GM12878 (cell line): ENCODE measurements at regions of chr11 and their contacts with region 1.

Region 1: DNA sequence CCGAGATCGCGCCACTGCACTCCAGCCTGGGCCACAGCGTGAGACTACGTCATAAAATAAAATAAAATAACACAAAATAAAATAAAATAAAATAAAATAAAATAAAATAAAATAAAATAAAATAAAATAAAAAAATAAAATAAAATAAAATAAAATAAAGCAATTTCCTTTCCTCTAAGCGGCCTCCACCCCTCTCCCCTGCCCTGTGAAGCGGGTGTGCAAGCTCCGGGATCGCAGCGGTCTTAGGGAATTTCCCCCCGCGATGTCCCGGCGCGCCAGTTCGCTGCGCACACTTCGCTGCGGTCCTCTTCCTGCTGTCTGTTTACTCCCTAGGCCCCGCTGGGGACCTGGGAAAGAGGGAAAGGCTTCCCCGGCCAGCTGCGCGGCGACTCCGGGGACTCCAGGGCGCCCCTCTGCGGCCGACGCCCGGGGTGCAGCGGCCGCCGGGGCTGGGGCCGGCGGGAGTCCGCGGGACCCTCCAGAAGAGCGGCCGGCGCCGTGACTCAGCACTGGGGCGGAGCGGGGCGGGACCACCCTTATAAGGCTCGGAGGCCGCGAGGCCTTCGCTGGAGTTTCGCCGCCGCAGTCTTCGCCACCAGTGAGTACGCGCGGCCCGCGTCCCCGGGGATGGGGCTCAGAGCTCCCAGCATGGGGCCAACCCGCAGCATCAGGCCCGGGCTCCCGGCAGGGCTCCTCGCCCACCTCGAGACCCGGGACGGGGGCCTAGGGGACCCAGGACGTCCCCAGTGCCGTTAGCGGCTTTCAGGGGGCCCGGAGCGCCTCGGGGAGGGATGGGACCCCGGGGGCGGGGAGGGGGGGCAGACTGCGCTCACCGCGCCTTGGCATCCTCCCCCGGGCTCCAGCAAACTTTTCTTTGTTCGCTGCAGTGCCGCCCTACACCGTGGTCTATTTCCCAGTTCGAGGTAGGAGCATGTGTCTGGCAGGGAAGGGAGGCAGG is at the start of gene GSTP1:
- DNase-seq: no peak
- ATAC-seq: peak; percentile 82
- H3K4me3 ChIP-seq: peak within 1 kb of the TSS; percentile 85
- H3K27ac ChIP-seq: peak within 1 kb of the TSS; percentile 89
- H3K4me1 ChIP-seq: peaks cover 54% of the 10 kb centered on the region
- H3K27me3 ChIP-seq: no peaks in the 10 kb centered on the region; a peak in 1 of 4 replicates
- CTCF ChIP-seq: peak; percentile 54 to 71 (median 60); a peak in 5 of 6 replicates
- EP300 ChIP-seq: no peak
- POLR2A ChIP-seq: peak; percentile 96
- RAD21 ChIP-seq: peak; percentile 23; the same call in 1 of the 2 replicates
- polyA plus RNA-seq, gene GSTP1: 469 to 685 TPM

Region 2: GRCh38 chr11:67563354-67564114 is 20.0 kb before region 1 on chr11:
- CTCF ChIA-PET with region 1: interaction called, 17 read pairs
- POLR2A ChIA-PET with region 1: no interaction called
- RAD21 ChIA-PET with region 1: interaction called, 6 read pairs
- SMC1A ChIA-PET with region 1: interaction called, 9 read pairs
- in situ Hi-C with region 1: no loop called
- intact Hi-C with region 1: no loop called
- DNase-seq: no peak
- ATAC-seq: no peak
- H3K4me3 ChIP-seq: no peak overlapping the region
- H3K27ac ChIP-seq: no peak overlapping the region
- H3K4me1 ChIP-seq: peaks cover 29% of the 10 kb centered on the region
- H3K27me3 ChIP-seq: no peaks in the 10 kb centered on the region
- CTCF ChIP-seq: no peak
- EP300 ChIP-seq: no peak
- POLR2A ChIP-seq: no peak
- RAD21 ChIP-seq: no peak

Region 3: DNA sequence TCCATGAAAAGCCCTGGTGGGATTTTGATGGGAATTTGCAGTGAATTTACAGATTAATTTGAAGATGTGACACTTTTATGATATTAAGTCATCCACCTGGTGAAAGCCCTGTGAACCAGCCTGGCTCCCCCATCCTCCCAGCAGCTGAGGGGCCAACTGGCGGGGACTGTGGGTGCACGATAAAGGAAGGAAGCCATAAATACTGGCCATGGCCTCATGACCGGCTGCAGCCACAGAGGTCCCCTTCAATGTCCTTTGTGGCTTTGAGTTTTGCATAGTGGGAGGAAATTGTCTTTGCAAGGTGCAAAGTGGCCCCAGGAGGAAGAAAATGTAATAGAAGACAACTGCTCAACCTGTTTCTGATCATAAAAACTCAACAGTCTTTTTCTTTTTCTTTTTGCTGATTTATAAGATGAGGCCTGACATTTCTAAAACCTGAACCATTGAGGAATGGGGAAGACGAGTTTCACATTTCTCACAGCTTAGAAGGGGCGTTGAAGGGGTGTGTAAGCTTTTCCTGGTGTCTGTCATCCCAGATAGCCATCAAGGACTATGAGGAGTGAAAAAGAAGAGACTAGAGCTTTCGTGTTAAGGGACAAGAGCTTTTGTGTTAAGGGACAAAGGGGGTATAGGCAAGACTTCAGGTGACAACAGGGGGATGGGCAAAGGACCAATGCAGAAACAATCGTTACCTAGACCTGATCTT is 17.0 kb after region 1 on chr11:
- CTCF ChIA-PET with region 1: interaction called, 25 read pairs
- POLR2A ChIA-PET with region 1: interaction called, 6 read pairs
- RAD21 ChIA-PET with region 1: interaction called, 4 read pairs
- SMC1A ChIA-PET with region 1: interaction called, 4 read pairs
- in situ Hi-C with region 1: no loop called
- intact Hi-C with region 1: no loop called
- DNase-seq: peak; percentile 64
- ATAC-seq: peak; percentile 99
- H3K4me3 ChIP-seq: peak overlapping the region; percentile 59
- H3K27ac ChIP-seq: peak overlapping the region; percentile 29; the same call in 1 of the 2 replicates
- H3K4me1 ChIP-seq: peaks cover 15% of the 10 kb centered on the region
- H3K27me3 ChIP-seq: no peaks in the 10 kb centered on the region
- CTCF ChIP-seq: peak in 1 of 3 experiments; percentile 23; a peak in 1 of 6 replicates
- EP300 ChIP-seq: peak; percentile 14 to 83; a peak in 3 of 4 replicates
- POLR2A ChIP-seq: peak; percentile 28; the same call in 1 of the 2 replicates
- RAD21 ChIP-seq: peak; percentile 37; the same call in 1 of the 2 replicates

Region 4: DNA sequence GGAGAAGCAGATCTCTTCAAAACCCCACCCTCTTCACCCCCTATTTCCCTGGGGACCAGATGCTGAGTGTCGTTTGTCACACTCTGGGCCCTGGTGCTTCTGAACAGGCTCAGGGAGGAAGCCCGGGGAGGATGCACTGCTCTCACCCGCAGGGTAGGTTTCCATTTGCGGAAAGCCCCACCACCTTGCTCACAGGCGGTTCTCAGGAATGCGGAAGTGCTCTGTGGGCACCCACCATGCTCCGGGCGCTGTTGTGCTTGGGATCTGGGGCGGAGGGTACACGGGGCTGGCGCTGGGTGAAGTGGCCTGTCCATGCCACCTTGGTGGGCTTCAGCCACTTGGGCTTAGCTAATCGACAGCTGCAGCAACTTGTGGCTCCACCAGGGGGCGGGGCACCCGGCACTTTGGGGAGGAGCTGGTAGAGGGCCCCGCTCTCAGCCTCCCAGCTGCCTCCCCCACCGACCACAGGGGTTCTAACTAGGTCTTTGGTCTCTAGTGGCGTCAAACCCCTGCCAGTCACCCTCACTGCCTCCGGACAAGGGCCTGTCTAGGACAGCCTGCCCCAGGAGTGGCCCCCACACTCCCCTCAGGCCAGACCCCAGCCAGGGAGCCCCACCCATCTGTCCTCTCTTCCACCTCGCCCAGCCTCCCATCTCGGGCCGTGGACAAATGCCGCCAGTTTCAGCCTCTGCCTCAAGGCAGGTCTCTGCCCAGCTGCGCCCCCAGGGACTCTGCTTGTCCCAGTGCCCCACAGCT is 30.6 kb after region 1 on chr11:
- CTCF ChIA-PET with region 1: interaction called, 54 read pairs
- POLR2A ChIA-PET with region 1: interaction called, 25 read pairs
- RAD21 ChIA-PET with region 1: interaction called, 21 read pairs
- SMC1A ChIA-PET with region 1: interaction called, 15 read pairs
- in situ Hi-C with region 1: no loop called
- intact Hi-C with region 1: loop called (anchors 1 kb)
- DNase-seq: peak; percentile 88
- ATAC-seq: peak; percentile 95
- H3K4me3 ChIP-seq: peak overlapping the region; percentile 46; the same call in 1 of the 2 replicates
- H3K27ac ChIP-seq: peak overlapping the region; percentile 97
- H3K4me1 ChIP-seq: peaks cover 22% of the 10 kb centered on the region
- H3K27me3 ChIP-seq: no peaks in the 10 kb centered on the region
- CTCF ChIP-seq: peak; percentile 34 to 72 (median 42)
- EP300 ChIP-seq: no peak; a peak in 1 of 4 replicates
- POLR2A ChIP-seq: peak; percentile 92
- RAD21 ChIP-seq: no peak

Region 5: DNA sequence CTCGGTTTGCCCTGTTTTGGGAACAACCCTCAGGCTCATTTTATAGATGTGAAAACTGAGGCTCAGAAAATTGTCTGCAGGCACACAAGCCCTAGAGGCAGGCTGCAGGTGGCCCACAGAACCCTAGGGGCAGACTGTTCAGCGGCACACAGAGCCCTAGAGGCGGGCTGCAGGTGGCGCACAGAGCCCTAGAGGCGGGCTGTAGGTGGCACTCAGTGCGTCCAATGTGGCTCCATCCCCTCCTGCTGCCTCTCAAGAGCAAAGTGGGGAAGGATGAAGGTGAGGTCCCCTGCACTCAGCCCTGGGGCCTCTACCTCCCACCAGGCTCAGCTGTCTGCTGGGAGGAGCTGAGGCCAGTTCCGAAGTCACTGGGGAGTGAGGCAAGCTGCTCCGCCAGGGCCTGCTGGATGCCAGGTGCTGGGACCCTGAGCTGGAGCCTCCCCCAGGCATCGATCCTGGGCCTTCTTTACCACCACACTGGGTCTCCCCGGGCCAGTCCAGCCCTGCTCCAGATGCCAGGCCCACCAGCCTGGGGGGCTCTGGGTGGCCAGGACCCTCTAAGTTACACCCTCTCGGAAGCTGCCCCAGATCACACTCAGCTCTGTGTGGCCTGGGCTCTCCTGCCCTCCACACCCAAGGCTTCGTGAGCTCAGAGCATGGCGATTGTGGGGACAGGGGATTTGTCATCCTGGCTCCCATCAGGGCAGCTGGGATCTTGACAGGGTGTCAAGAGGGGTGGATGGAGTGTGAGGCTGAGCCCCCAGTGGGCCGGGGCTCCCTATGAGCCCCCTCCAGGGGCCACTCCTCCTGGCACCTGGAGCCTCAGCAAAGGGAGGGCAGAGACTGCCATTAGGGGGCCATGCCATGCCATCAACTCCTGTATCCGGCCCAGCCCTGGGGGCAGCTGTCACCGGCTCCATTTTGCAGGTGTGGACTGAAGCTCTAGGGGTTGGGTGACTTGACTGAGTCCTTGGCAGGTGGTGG is 64.9 kb after region 1 on chr11:
- CTCF ChIA-PET with region 1: interaction called, 11 read pairs
- POLR2A ChIA-PET with region 1: interaction called, 4 read pairs
- RAD21 ChIA-PET with region 1: interaction called, 6 read pairs
- SMC1A ChIA-PET with region 1: interaction called, 4 read pairs
- in situ Hi-C with region 1: no loop called
- intact Hi-C with region 1: no loop called
- DNase-seq: no peak
- ATAC-seq: peak; percentile 84
- H3K4me3 ChIP-seq: peak overlapping the region; percentile 9; the same call in 1 of the 2 replicates
- H3K27ac ChIP-seq: peak overlapping the region; percentile 78
- H3K4me1 ChIP-seq: peaks cover 61% of the 10 kb centered on the region
- H3K27me3 ChIP-seq: no peaks in the 10 kb centered on the region
- CTCF ChIP-seq: peak; percentile 71 to 72 (median 72)
- EP300 ChIP-seq: no peak
- POLR2A ChIP-seq: peak; percentile 43; the same call in 1 of the 2 replicates
- RAD21 ChIP-seq: peak; percentile 52